CD8-positive, alpha-beta T cell (primary cell): ENCODE measurements at regions of chr11 and their contacts with region 1.

Region 1: GRCh38 chr11:130314750-130315285 is at the start of gene ZBTB44:
- DNase-seq: peak; percentile 84 to 95 (median 91)
- ATAC-seq: peak; percentile 82
- H3K4me3 ChIP-seq: peak within 1 kb of the TSS; percentile 79 to 87
- H3K4me3 Mint-ChIP-seq: peak within 1 kb of the TSS; percentile 90
- H3K27ac ChIP-seq: peak within 1 kb of the TSS; percentile 76 to 84
- H3K27ac Mint-ChIP-seq: peak within 1 kb of the TSS; percentile 99
- H3K4me1 ChIP-seq: peaks cover 31% of the 10 kb centered on the region
- H3K4me1 Mint-ChIP-seq: peaks cover 41% of the 10 kb centered on the region
- H3K27me3 ChIP-seq: no peaks in the 10 kb centered on the region
- H3K27me3 Mint-ChIP-seq: no peaks in the 10 kb centered on the region
- CTCF ChIP-seq: no peak
- total RNA-seq, gene ZBTB44: 31.8 to 35.0 TPM

Region 2: DNA sequence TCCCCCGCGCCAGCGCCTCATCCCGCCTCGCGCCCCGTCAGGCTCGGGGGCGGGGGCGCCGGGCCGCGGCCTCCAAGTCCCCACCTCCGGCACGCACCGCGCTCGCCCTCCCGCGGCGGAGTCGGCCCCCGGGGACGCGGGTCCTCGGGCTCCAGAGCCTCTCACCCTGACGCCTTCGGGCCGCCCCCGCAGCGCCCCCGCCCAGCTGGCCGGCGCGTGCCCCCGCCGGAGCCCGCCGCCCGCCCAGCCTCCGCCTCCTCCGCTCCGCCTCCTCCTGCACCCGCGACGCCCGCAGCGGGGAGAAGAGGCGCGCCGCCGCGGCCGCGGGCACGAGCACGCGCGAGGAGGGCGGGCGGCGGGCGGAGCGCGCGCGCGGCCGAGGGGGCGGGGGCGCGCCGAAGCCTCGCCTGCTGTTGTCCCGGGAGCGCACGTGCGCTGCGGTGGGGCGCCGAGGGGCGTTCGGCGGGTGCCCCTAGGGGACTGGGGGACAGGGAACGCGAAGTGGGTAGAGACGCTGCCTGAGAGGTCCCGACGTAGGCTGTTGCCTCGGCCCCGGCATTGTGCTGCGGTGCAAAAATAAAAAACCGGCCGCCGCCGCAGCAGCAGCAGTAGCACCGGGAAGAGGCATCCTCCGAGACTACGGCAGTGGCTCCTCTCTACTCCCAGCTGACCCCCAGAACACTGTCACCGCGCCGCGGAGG is 1035.3 kb before region 1 on chr11:
- CTCF ChIA-PET with region 1: no interaction called
- POLR2A ChIA-PET with region 1: no interaction called
- intact Hi-C with region 1: loop called (anchors 10 kb)
- DNase-seq: peak; percentile 48 to 88 (median 75)
- ATAC-seq: peak; percentile 78
- H3K4me3 ChIP-seq: peak overlapping the region; percentile 62 to 64
- H3K4me3 Mint-ChIP-seq: peak overlapping the region; percentile 72
- H3K27ac ChIP-seq: peak overlapping the region in 1 of 2 experiments; percentile 46
- H3K27ac Mint-ChIP-seq: peak overlapping the region; percentile 49
- H3K4me1 ChIP-seq: peaks cover 14% of the 10 kb centered on the region
- H3K4me1 Mint-ChIP-seq: peaks cover 29% of the 10 kb centered on the region
- H3K27me3 ChIP-seq: peaks cover 0 to 5% of the 10 kb centered on the region in 2 experiments
- H3K27me3 Mint-ChIP-seq: peaks cover 15% of the 10 kb centered on the region
- CTCF ChIP-seq: no peak

Region 3: DNA sequence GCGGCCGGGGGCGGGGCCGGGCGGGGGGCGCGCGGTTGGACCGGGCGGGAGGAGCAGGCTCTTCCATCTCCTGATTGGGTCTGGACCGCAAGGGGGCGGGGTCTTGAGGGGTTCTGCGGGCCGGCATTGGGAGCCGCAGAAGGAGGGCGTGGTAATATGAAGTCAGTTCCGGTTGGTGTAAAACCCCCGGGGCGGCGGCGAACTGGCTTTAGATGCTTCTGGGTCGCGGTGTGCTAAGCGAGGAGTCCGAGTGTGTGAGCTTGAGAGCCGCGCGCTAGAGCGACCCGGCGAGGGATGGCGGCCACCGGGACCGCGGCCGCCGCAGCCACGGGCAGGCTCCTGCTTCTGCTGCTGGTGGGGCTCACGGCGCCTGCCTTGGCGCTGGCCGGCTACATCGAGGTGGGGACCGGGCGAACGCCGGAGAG is 245.1 kb before region 1 on chr11 and contains the start of gene APLP2:
- CTCF ChIA-PET with region 1: no interaction called
- POLR2A ChIA-PET with region 1: no interaction called
- intact Hi-C with region 1: loop called (anchors 1 to 5 kb)
- DNase-seq: peak; percentile 94 to 99 (median 97)
- ATAC-seq: peak; percentile 93
- H3K4me3 ChIP-seq: peak within 1 kb of the TSS; percentile 77 to 88
- H3K4me3 Mint-ChIP-seq: peak within 1 kb of the TSS; percentile 97
- H3K27ac ChIP-seq: peak within 1 kb of the TSS; percentile 74 to 80
- H3K27ac Mint-ChIP-seq: peak within 1 kb of the TSS; percentile 95
- H3K4me1 ChIP-seq: peaks cover 17% of the 10 kb centered on the region
- H3K4me1 Mint-ChIP-seq: peaks cover 18% of the 10 kb centered on the region
- H3K27me3 ChIP-seq: no peaks in the 10 kb centered on the region
- H3K27me3 Mint-ChIP-seq: peaks cover 4% of the 10 kb centered on the region
- CTCF ChIP-seq: no peak
- total RNA-seq, gene APLP2: 23.2 to 24.7 TPM

Region 4: GRCh38 chr11:130202009-130202817 is 112.6 kb before region 1 on chr11:
- CTCF ChIA-PET with region 1: no interaction called
- POLR2A ChIA-PET with region 1: no interaction called
- intact Hi-C with region 1: no loop called
- DNase-seq: no peak
- ATAC-seq: no peak
- H3K4me3 ChIP-seq: no peak overlapping the region
- H3K4me3 Mint-ChIP-seq: no peak overlapping the region
- H3K27ac ChIP-seq: no peak overlapping the region
- H3K27ac Mint-ChIP-seq: no peak overlapping the region
- H3K4me1 ChIP-seq: no peaks in the 10 kb centered on the region
- H3K4me1 Mint-ChIP-seq: no peaks in the 10 kb centered on the region
- H3K27me3 ChIP-seq: no peaks in the 10 kb centered on the region
- H3K27me3 Mint-ChIP-seq: no peaks in the 10 kb centered on the region
- CTCF ChIP-seq: no peak

Region 5: DNA sequence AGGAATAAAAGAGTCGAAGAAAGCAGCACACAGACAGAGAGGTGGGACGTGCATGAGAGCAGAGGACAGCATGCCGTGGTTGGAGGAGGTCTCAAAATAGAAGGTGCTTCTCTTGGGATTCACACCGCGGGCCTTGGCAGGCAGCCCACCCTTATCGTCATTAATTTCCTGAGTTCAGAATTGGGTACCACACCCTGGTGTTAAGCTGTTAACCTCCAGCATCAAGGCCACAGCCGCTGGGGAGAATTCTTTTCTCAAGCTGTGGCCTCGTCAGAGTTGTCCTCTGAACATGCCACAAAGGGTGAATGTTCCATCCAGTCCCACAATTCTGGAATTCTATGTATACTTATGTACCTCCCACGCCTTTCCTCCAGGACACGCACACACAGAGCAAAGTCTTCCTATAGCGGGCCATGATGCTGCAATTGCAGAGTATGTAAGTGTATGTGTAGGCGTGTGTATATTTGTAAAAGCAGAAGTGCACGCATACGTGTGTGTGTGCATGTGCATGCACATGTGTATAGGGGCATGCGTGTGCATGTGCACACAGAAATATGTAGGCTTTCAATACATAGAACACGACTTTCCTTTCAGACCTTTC is 74.6 kb after region 1 on chr11:
- CTCF ChIA-PET with region 1: no interaction called
- POLR2A ChIA-PET with region 1: no interaction called
- intact Hi-C with region 1: loop called in 1 of 2 experiments (anchors 2 kb)
- DNase-seq: peak; percentile 10 to 88 (median 51)
- ATAC-seq: peak; percentile 72
- H3K4me3 ChIP-seq: peak overlapping the region; percentile 39
- H3K4me3 Mint-ChIP-seq: peak overlapping the region; percentile 82
- H3K27ac ChIP-seq: peak overlapping the region; percentile 44 to 85
- H3K27ac Mint-ChIP-seq: peak overlapping the region; percentile 83
- H3K4me1 ChIP-seq: peaks cover 24% of the 10 kb centered on the region
- H3K4me1 Mint-ChIP-seq: peaks cover 30% of the 10 kb centered on the region
- H3K27me3 ChIP-seq: no peaks in the 10 kb centered on the region
- H3K27me3 Mint-ChIP-seq: no peaks in the 10 kb centered on the region
- CTCF ChIP-seq: no peak

Region 6: GRCh38 chr11:130916238-130916855 is 601.5 kb after region 1 on chr11 and contains the start of gene SNX19:
- CTCF ChIA-PET with region 1: no interaction called
- POLR2A ChIA-PET with region 1: no interaction called
- intact Hi-C with region 1: loop called (anchors 1 to 5 kb)
- DNase-seq: peak; percentile 84 to 94 (median 90)
- ATAC-seq: peak; percentile 99
- H3K4me3 ChIP-seq: peak within 1 kb of the TSS; percentile 53 to 69
- H3K4me3 Mint-ChIP-seq: peak within 1 kb of the TSS; percentile 87
- H3K27ac ChIP-seq: peak within 1 kb of the TSS; percentile 74 to 89
- H3K27ac Mint-ChIP-seq: peak within 1 kb of the TSS; percentile 91
- H3K4me1 ChIP-seq: peaks cover 15% of the 10 kb centered on the region
- H3K4me1 Mint-ChIP-seq: peaks cover 34% of the 10 kb centered on the region
- H3K27me3 ChIP-seq: no peaks in the 10 kb centered on the region
- H3K27me3 Mint-ChIP-seq: peaks cover 11% of the 10 kb centered on the region
- CTCF ChIP-seq: peak; percentile 94
- total RNA-seq, gene SNX19: 31.7 to 36.7 TPM